IMR-90 (cell line): ENCODE measurements at regions of chr21 and their contacts with region 1.

Region 1: GRCh38 chr21:31786164-31786920 is 54.4 kb upstream of the SCAF4 start:
- DNase-seq: no peak
- ATAC-seq: no peak
- H3K4me3 ChIP-seq: no peak overlapping the region
- H3K27ac ChIP-seq: no peak overlapping the region
- H3K4me1 ChIP-seq: no peaks in the 10 kb centered on the region
- H3K27me3 ChIP-seq: peaks cover 3% of the 10 kb centered on the region; the same call in 1 of the 2 replicates
- CTCF ChIP-seq: no peak
- POLR2A ChIP-seq: no peak
- RAD21 ChIP-seq: no peak

Region 2: DNA sequence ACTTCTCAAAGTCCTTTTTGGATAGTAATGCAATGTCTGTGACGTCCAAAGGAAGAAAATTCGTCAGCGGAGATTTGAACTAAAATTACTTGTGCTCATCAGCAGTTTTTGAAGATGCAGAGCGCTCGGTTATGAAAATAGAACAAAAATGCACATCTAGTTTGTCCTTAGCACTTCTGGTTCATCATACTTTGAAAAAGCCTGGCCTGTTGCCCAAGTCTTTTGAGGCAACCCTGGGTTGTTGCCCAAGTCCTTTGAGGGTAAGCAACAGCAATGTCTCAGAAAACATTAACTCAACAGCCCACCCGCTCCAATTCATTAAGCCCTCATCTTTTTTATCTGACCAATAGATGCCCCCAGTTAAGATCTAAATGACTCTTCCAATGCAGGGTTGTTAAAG is 178.3 kb after region 1 on chr21:
- CTCF ChIA-PET with region 1: no interaction called
- POLR2A ChIA-PET with region 1: no interaction called
- dilution Hi-C with region 1: no loop called
- in situ Hi-C with region 1: no loop called
- intact Hi-C with region 1: no loop called
- DNase-seq: no peak
- ATAC-seq: no peak
- H3K4me3 ChIP-seq: no peak overlapping the region
- H3K27ac ChIP-seq: no peak overlapping the region
- H3K4me1 ChIP-seq: no peaks in the 10 kb centered on the region
- H3K27me3 ChIP-seq: no peaks in the 10 kb centered on the region
- CTCF ChIP-seq: no peak
- POLR2A ChIP-seq: no peak
- RAD21 ChIP-seq: no peak

Region 3: GRCh38 chr21:32096411-32096810 is 310.1 kb after region 1 on chr21:
- CTCF ChIA-PET with region 1: no interaction called
- POLR2A ChIA-PET with region 1: no interaction called
- dilution Hi-C with region 1: no loop called
- in situ Hi-C with region 1: no loop called
- intact Hi-C with region 1: loop called (anchors 5 kb)
- DNase-seq: no peak
- ATAC-seq: no peak
- H3K4me3 ChIP-seq: no peak overlapping the region
- H3K27ac ChIP-seq: no peak overlapping the region
- H3K4me1 ChIP-seq: no peaks in the 10 kb centered on the region
- H3K27me3 ChIP-seq: peaks cover 5% of the 10 kb centered on the region
- CTCF ChIP-seq: peak; percentile 26; the same call in 1 of the 2 replicates
- POLR2A ChIP-seq: no peak
- RAD21 ChIP-seq: no peak